ENCODE measurements at regions of chr6 and their contacts with region 1.

Region 1: GRCh38 chr6:159104163-159104925 is 59.6 kb upstream of the TAGAP start:
- DNase-seq: peak; percentile 75 to 81 (median 78)
- H3K4me3 ChIP-seq: no peak overlapping the region
- H3K4me3 Mint-ChIP-seq: peak overlapping the region; percentile 54 to 82 (median 71)
- H3K27ac ChIP-seq: peak overlapping the region; percentile 25
- H3K27ac Mint-ChIP-seq: peak overlapping the region; percentile 48 to 95 (median 86)
- H3K4me1 ChIP-seq: peaks cover 74% of the 10 kb centered on the region
- H3K4me1 Mint-ChIP-seq: peaks cover 57 to 85% (median 66%) of the 10 kb centered on the region in 4 donors
- H3K27me3 ChIP-seq: no peaks in the 10 kb centered on the region
- H3K27me3 Mint-ChIP-seq: no peaks in the 10 kb centered on the region

Region 2: DNA sequence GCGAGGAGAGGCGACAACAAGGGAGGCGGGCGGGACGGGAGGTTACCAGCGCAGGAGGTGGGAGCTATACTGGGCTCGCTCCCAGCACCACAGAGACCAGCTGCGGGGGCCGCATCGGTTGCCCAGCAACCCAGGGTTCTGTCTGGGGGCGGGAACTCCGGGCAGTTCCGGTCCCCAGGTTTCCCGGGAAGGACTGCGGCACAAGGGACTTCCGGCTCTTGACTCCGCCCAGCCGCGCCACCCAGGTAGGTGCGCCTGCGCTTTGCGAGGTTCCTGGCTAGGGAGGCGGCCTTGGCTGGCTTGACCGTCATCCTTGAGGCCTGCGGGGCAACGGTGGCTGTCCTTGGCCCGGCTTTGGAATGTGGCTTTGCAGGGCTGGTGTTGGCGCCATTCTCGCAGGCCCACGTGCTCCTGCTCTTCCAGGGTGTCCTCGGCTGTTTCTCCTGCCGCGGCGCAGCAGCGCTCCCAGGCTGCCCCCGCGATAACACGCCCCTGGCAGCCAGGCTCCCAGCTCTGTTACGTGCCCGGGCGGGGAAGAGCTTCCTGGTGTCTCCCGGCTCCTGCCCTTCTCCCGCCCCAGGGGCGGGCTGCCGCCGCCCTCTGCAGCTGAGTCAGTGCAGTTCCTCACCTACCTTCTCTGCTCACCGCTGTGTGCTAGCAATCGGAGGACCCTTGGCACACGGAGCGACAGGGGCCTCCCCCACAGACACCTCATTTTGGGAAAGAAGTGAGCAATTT is 104.5 kb before region 1 on chr6 and contains the start of gene RSPH3:
- CTCF ChIA-PET with region 1: interaction called, 676 read pairs
- POLR2A ChIA-PET with region 1: interaction called, 144 read pairs
- intact Hi-C with region 1: no loop called
- DNase-seq: peak; percentile 81 to 87 (median 83)
- H3K4me3 ChIP-seq: peak within 1 kb of the TSS; percentile 84
- H3K4me3 Mint-ChIP-seq: peak within 1 kb of the TSS; percentile 96 to 99 (median 98)
- H3K27ac ChIP-seq: peak within 1 kb of the TSS; percentile 73
- H3K27ac Mint-ChIP-seq: peak within 1 kb of the TSS; percentile 92 to 97 (median 95)
- H3K4me1 ChIP-seq: peaks cover 18% of the 10 kb centered on the region
- H3K4me1 Mint-ChIP-seq: peaks cover 10 to 33% (median 18%) of the 10 kb centered on the region in 4 donors
- H3K27me3 ChIP-seq: no peaks in the 10 kb centered on the region
- H3K27me3 Mint-ChIP-seq: no peaks in the 10 kb centered on the region
- total RNA-seq, gene RSPH3: 3.4 to 3.5 TPM

Region 3: DNA sequence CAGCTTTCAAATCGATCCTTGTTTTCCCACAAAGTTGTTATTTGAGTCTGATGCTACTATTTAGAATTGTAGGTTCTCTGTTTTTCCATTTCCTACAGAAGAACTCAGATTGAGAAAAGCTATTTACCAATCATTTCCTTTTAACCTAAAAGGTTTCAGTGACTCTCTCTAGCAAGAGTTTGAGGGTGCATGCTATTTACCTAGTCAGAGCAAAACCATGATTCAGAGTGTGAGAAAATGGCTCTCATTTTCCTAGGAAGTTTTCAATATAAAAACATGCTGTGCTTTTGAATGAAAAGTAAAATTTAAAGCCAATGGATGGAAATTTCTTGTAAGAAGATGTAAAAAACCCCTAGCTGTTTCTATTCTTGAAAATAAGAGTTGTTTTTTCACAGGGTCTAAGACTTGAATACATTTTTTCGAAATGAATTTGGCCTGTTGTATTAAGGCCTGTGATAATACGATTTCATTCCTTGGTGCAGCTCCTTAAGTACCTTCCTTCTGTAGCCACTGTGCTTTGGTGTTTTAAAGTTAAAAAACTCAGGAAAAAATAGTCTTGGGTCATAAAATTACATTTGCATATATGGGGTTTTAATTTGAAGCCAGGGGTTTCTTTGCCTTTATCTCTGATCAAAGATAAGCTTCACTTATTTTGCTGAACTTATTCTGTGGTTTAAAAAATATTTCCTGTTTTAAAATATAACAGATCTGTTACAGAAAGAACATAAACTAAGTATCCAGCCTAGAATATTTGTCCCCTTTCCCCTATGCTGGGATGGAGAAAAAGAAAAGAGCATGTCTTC is 86.4 kb before region 1 on chr6:
- CTCF ChIA-PET with region 1: interaction called, 676 read pairs
- POLR2A ChIA-PET with region 1: interaction called, 18 read pairs
- intact Hi-C with region 1: no loop called
- DNase-seq: no peak
- H3K4me3 ChIP-seq: no peak overlapping the region
- H3K4me3 Mint-ChIP-seq: peak overlapping the region in 6 of 8 donors; percentile 25 to 76 (median 50)
- H3K27ac ChIP-seq: peak overlapping the region; percentile 48
- H3K27ac Mint-ChIP-seq: peak overlapping the region; percentile 52 to 90 (median 77)
- H3K4me1 ChIP-seq: peaks cover 64% of the 10 kb centered on the region
- H3K4me1 Mint-ChIP-seq: peaks cover 39 to 62% (median 51%) of the 10 kb centered on the region in 4 donors
- H3K27me3 ChIP-seq: no peaks in the 10 kb centered on the region
- H3K27me3 Mint-ChIP-seq: no peaks in the 10 kb centered on the region

Region 4: DNA sequence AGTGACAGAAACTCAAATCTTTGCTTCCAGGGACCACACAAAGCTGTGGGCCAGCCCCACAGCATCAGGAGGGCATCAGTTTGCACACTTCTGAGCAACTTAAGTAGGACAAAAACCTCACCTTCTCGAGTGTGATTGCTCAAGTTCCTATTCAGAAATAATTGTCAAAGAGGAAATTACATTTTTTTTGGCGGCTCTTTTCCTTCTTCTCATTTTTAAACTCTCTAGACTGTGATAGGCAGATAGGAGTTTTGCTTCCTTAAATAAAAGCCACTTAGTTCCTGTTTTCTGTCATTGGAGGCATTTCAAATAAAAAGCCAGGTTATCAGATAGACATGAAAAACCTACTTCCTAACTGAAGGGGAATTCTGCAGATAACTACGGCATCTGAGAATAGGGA is 48.3 kb before region 1 on chr6:
- CTCF ChIA-PET with region 1: interaction called, 22 read pairs
- POLR2A ChIA-PET with region 1: interaction called, 109 read pairs
- intact Hi-C with region 1: no loop called
- DNase-seq: no peak
- H3K4me3 ChIP-seq: no peak overlapping the region
- H3K4me3 Mint-ChIP-seq: peak overlapping the region; percentile 21 to 83 (median 72)
- H3K27ac ChIP-seq: peak overlapping the region; percentile 17
- H3K27ac Mint-ChIP-seq: peak overlapping the region; percentile 81 to 92 (median 86)
- H3K4me1 ChIP-seq: peaks cover 64% of the 10 kb centered on the region
- H3K4me1 Mint-ChIP-seq: peaks cover 38 to 74% (median 56%) of the 10 kb centered on the region in 4 donors
- H3K27me3 ChIP-seq: no peaks in the 10 kb centered on the region
- H3K27me3 Mint-ChIP-seq: no peaks in the 10 kb centered on the region

Region 5: GRCh38 chr6:159080217-159080976 is 23.9 kb before region 1 on chr6:
- CTCF ChIA-PET with region 1: interaction called, 11 read pairs
- POLR2A ChIA-PET with region 1: interaction called, 3 read pairs
- intact Hi-C with region 1: no loop called
- DNase-seq: no peak
- H3K4me3 ChIP-seq: no peak overlapping the region
- H3K4me3 Mint-ChIP-seq: peak overlapping the region in 1 of 8 donors; percentile 33
- H3K27ac ChIP-seq: no peak overlapping the region
- H3K27ac Mint-ChIP-seq: peak overlapping the region in 4 of 7 donors; percentile 4 to 62 (median 24)
- H3K4me1 ChIP-seq: peaks cover 22% of the 10 kb centered on the region
- H3K4me1 Mint-ChIP-seq: peaks cover 18 to 43% (median 29%) of the 10 kb centered on the region in 4 donors
- H3K27me3 ChIP-seq: no peaks in the 10 kb centered on the region
- H3K27me3 Mint-ChIP-seq: no peaks in the 10 kb centered on the region

Region 6: DNA sequence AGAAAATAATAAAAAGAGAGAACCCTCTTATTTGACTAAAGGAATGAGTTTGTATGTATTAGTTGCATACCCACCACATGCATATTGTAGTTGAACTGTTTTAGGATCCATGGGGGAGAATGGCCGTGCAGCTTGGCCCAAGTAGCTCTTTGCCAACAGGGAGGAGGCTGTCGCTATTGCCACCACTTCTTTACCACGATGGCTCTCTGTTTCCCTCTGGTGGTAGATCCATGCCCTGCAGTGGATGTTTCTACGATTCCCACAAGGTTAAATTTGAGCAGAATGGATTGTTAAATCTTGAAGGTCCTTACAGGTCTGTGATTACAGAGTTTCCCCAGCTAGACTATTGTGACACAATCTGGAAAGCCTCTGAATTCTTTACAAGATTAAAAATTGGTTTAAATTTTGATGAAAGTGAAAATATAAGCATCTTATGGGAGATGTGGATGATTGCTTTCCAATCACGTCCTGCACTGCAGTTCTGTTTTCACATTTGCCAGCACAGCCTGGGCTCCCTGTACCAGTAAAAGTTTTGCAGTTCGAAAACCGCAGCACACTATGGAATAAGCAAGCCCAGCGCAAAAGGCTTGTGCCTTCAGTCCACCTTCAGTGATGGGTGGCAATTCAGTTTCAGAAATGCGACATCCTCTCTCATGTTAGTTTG is 30.5 kb after region 1 on chr6:
- CTCF ChIA-PET with region 1: interaction called, 193 read pairs
- POLR2A ChIA-PET with region 1: interaction called, 23 read pairs
- intact Hi-C with region 1: loop called (anchors 1 kb)
- DNase-seq: peak; percentile 69 to 77 (median 73)
- H3K4me3 ChIP-seq: no peak overlapping the region
- H3K4me3 Mint-ChIP-seq: no peak overlapping the region
- H3K27ac ChIP-seq: no peak overlapping the region
- H3K27ac Mint-ChIP-seq: no peak overlapping the region
- H3K4me1 ChIP-seq: peaks cover 6% of the 10 kb centered on the region
- H3K4me1 Mint-ChIP-seq: peaks cover 0 to 6% (median 4%) of the 10 kb centered on the region in 4 donors
- H3K27me3 ChIP-seq: no peaks in the 10 kb centered on the region
- H3K27me3 Mint-ChIP-seq: peaks cover 5 to 8% of the 10 kb centered on the region in 2 donors

Region 7: GRCh38 chr6:159399751-159400221 is 295.4 kb after region 1 on chr6:
- CTCF ChIA-PET with region 1: no interaction called
- POLR2A ChIA-PET with region 1: no interaction called
- intact Hi-C with region 1: no loop called
- DNase-seq: no peak
- H3K4me3 ChIP-seq: no peak overlapping the region
- H3K4me3 Mint-ChIP-seq: no peak overlapping the region
- H3K27ac ChIP-seq: no peak overlapping the region
- H3K27ac Mint-ChIP-seq: no peak overlapping the region
- H3K4me1 ChIP-seq: no peaks in the 10 kb centered on the region
- H3K4me1 Mint-ChIP-seq: no peaks in the 10 kb centered on the region
- H3K27me3 ChIP-seq: no peaks in the 10 kb centered on the region
- H3K27me3 Mint-ChIP-seq: peaks cover 7 to 8% of the 10 kb centered on the region in 2 donors

Measured in CD4-positive, alpha-beta memory T cell (primary cell).